Activated CD4-positive, alpha-beta T cell treated with anti-CD3 and anti-CD28 coated beads, Interleukin-2, amount 10 ng/mL, durations not matched to agents 7 days and 5 days (primary cell): ENCODE measurements at regions of chr22 and their contacts with region 1.

Region 1: DNA sequence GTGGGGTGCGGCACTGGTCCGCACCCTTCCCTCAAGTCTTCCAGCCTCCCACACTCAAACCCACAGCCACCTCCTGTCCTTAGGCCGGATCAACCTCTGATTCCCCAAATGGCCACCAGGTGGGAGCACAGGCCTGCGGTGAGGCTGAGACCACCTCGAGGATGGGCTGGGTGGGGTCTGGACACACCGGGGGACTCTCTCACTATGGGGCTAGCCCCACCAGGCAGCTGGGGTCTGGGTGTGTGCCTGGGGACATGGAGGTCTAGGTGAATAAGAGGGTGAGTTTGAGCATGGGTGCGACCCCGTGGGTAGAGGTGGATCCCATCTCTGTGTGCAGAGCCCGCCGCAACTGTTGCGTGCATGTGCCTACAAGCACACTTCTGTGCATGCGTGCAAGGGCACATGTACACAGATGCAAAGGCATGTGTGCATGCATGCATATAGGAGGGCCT is 32.6 kb downstream of the MYO18B start:
- DNase-seq: no peak
- H3K4me3 Mint-ChIP-seq: no peak overlapping the region
- H3K27ac Mint-ChIP-seq: no peak overlapping the region
- H3K4me1 Mint-ChIP-seq: peaks cover 36% of the 10 kb centered on the region
- H3K27me3 Mint-ChIP-seq: no peaks in the 10 kb centered on the region

Region 2: GRCh38 chr22:25461301-25461700 is 313.3 kb before region 1 on chr22:
- CTCF ChIA-PET with region 1: interaction called, 30 read pairs
- POLR2A ChIA-PET with region 1: no interaction called
- DNase-seq: no peak
- H3K4me3 Mint-ChIP-seq: no peak overlapping the region
- H3K27ac Mint-ChIP-seq: no peak overlapping the region
- H3K4me1 Mint-ChIP-seq: peaks cover 19% of the 10 kb centered on the region
- H3K27me3 Mint-ChIP-seq: no peaks in the 10 kb centered on the region

Region 3: GRCh38 chr22:25704701-25705100 is 69.9 kb before region 1 on chr22:
- CTCF ChIA-PET with region 1: interaction called, 14 read pairs
- POLR2A ChIA-PET with region 1: interaction called, 3 read pairs
- DNase-seq: no peak
- H3K4me3 Mint-ChIP-seq: no peak overlapping the region
- H3K27ac Mint-ChIP-seq: no peak overlapping the region
- H3K4me1 Mint-ChIP-seq: peaks cover 70% of the 10 kb centered on the region
- H3K27me3 Mint-ChIP-seq: no peaks in the 10 kb centered on the region

Region 4: DNA sequence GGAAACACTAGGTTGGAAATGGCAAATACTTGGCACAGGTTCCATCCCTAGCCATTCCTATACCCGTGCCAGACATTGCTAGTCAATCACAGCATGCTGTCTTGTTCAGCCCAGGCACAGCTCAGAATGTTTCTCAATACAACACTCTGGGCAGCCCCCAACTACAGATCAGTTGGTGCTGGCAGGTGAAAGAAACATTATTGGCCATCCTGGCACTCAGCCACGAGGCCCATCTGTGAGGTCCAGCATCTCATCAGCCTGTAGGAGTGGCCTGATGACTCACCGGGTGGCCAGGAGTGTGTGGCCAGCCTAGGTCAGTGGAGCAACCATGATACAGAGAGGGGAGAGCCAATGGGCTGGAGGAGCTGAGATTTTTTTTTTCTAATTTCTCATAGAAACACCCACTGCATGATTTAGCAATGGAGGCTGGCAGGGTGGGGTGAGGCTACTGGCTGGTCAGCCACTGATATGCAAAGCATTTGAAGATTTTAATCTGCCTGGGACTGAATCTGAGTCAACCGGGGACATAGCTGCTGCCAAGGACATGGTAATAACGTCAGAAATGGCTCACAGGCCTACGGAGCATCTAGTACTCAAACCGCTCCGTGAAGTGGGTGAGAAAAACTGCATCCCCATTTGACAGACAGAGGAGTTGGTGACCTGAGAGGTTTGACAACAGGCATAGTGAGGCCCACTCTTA is 27.2 kb before region 1 on chr22:
- CTCF ChIA-PET with region 1: interaction called, 10 read pairs
- POLR2A ChIA-PET with region 1: no interaction called
- DNase-seq: no peak
- H3K4me3 Mint-ChIP-seq: no peak overlapping the region
- H3K27ac Mint-ChIP-seq: no peak overlapping the region
- H3K4me1 Mint-ChIP-seq: peaks cover 78% of the 10 kb centered on the region
- H3K27me3 Mint-ChIP-seq: no peaks in the 10 kb centered on the region

Region 5: DNA sequence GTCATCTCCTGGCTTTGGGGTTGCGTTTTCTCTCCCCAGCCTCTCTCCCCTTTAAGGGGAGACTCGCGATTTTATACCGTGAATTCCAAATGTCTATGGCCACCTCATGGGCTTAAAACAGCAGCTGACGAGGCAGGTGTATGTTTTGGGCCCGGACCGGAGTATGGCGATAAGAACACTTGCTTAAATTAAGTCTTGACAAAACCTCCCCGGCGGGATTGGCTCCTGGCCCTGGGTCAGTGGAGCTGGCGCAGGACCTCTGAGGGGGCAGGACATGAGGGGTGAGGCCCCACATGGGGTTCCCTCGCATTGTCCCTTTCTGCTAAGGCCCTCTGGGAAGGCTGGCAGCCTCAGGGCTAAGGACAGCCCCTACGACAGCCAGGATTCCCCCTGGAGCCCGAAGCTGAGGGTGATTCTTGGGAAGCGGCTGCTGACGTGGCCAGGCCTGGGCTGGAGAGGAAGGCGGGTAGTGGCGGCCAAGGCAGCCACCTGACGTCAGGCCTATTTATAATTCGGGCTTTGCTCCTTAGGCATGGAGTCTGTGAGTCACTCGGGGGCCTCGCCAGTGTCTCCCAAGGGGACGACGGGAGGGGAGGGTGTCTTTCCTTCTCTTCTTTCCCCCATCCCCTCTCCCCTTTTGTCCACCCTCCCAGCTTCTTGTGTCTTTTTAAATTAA is 19.9 kb before region 1 on chr22:
- CTCF ChIA-PET with region 1: interaction called, 13 read pairs
- POLR2A ChIA-PET with region 1: no interaction called
- DNase-seq: no peak
- H3K4me3 Mint-ChIP-seq: no peak overlapping the region
- H3K27ac Mint-ChIP-seq: no peak overlapping the region
- H3K4me1 Mint-ChIP-seq: peaks cover 47% of the 10 kb centered on the region
- H3K27me3 Mint-ChIP-seq: no peaks in the 10 kb centered on the region

Region 6: GRCh38 chr22:25764270-25765015 is 10.2 kb before region 1 on chr22:
- CTCF ChIA-PET with region 1: interaction called, 10 read pairs
- POLR2A ChIA-PET with region 1: no interaction called
- DNase-seq: no peak
- H3K4me3 Mint-ChIP-seq: no peak overlapping the region
- H3K27ac Mint-ChIP-seq: no peak overlapping the region
- H3K4me1 Mint-ChIP-seq: peaks cover 40% of the 10 kb centered on the region
- H3K27me3 Mint-ChIP-seq: no peaks in the 10 kb centered on the region